Esophagus squamous epithelium (tissue), 5 donors: ENCODE measurements at regions of chr9 and their contacts with region 1.

Region 1: GRCh38 chr9:27033823-27034403 is 28.4 kb upstream of the LRRC19 start:
- DNase-seq: no peak
- H3K4me3 ChIP-seq: no peak overlapping the region
- H3K27ac ChIP-seq: no peak overlapping the region
- H3K4me1 ChIP-seq: peaks cover 0 to 5% (median 0%) of the 10 kb centered on the region in 3 donors
- H3K27me3 ChIP-seq: no peaks in the 10 kb centered on the region
- CTCF ChIP-seq: peak; percentile 66 to 80 (median 75)
- POLR2A ChIP-seq: no peak

Region 2: GRCh38 chr9:26735160-26735559 is 298.8 kb before region 1 on chr9:
- intact Hi-C with region 1: no loop called
- DNase-seq: no peak
- H3K4me3 ChIP-seq: no peak overlapping the region
- H3K27ac ChIP-seq: no peak overlapping the region
- H3K4me1 ChIP-seq: no peaks in the 10 kb centered on the region
- H3K27me3 ChIP-seq: peaks cover 0 to 5% (median 0%) of the 10 kb centered on the region in 4 donors
- CTCF ChIP-seq: no peak
- POLR2A ChIP-seq: no peak

Region 3: DNA sequence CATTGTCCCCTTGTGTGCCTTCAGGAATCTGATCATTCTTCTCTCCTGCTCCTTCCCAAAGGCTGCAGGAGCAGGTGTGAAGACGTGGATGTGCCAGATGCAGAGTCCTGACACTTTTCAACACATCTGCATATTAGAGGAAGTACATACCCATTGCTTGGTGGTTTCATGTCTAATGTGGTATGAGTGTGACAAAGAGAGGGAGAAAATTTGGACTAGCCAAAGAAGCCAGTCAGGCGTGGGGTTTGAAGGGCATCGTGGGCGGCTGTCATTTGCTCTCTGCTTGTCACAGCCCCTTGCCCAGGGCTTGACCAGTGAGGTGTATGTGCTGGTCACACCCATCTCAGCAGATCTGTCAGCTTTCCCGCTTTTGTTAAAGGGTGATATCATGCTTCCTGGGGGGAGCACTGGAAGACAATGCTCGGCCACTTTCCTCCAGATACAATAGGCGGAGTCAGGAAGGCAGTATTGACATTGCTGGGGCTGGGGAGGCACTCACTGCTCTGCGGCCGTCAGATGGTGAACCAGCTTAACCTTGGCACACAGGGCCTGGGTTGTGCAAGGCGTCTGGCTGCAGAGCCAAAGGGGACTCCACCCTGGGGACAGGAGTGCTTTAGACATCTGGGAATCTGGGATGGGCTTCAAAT is 83.7 kb after region 1 on chr9:
- intact Hi-C with region 1: no loop called
- DNase-seq: no peak
- H3K4me3 ChIP-seq: no peak overlapping the region
- H3K27ac ChIP-seq: peak overlapping the region; percentile 9 to 81 (median 46)
- H3K4me1 ChIP-seq: peaks cover 0 to 31% (median 9%) of the 10 kb centered on the region in 3 donors
- H3K27me3 ChIP-seq: no peaks in the 10 kb centered on the region
- CTCF ChIP-seq: no peak
- POLR2A ChIP-seq: no peak

Region 4: DNA sequence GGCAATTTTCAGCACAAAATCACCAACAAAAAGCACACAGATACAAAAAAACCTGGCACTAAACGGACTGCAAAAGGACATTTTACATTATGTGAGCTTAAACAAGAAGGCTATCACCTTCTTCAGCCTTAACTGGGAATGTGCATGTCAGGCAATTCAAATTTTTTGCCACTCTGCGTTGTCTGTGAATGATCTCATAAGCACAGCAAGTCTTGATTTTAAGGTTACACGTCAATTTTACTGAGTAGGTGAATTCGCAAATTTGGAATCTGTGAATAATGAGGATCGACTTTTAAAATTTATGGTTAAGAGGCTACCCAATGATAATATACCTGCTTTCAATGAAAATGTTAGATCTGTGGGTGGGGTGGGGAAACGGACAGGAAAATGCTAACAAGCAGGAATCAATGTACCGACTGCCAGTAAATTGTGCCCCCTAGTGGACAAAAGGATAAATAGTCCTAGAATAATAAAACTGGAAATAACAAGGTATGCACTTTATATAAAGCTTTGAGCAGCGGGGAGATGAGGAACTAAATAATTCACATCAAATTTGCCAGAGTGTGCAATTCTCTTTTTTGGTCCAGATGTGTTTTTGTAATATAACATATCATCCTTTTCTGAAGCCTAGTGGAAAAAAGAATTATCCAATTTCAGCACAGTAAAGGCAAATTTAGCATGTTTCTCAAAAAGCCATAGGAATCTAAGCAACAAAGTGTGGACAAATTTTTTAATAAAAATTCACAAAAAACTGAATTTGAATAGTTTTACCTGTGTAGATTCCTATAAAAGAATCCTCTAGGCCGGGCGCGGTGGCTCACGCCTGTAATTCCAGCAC is 242.5 kb after region 1 on chr9:
- intact Hi-C with region 1: loop called (anchors 5 kb)
- DNase-seq: no peak
- H3K4me3 ChIP-seq: no peak overlapping the region
- H3K27ac ChIP-seq: no peak overlapping the region
- H3K4me1 ChIP-seq: peaks cover 0 to 8% (median 0%) of the 10 kb centered on the region in 3 donors
- H3K27me3 ChIP-seq: no peaks in the 10 kb centered on the region
- CTCF ChIP-seq: peak in 5 of 6 experiments; percentile 62 to 79 (median 74)
- POLR2A ChIP-seq: no peak

Region 5: DNA sequence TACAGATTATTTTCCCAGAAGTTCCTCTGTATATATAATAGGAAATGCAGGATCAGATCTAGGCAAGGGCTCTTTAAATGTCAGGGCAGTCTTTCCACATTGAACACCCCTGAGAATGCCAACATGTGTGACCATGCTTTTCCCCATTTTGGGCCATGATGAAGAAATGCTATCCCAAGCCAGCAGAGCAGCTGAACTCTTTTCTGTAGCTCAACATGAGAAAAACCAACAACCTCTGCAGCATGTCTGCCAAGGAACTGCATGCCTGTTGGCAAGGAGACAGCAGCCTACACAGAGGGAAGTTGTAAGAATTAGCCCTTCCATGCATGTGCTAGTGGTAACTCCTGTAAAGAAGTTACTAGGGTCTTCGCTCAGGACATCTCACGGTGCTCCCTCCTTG is 480.6 kb after region 1 on chr9:
- intact Hi-C with region 1: no loop called
- DNase-seq: no peak
- H3K4me3 ChIP-seq: no peak overlapping the region
- H3K27ac ChIP-seq: no peak overlapping the region
- H3K4me1 ChIP-seq: peaks cover 0 to 17% (median 0%) of the 10 kb centered on the region in 3 donors
- H3K27me3 ChIP-seq: no peaks in the 10 kb centered on the region
- CTCF ChIP-seq: no peak
- POLR2A ChIP-seq: no peak